Activated T-helper 1 cell treated with anti-CD3 and anti-CD28 coated beads, Interleukin-12 subunit alpha, Interleukin-12 subunit beta, Interleukin-2, Interleukin-4 antibody, amounts not matched to agents 30 ng/mL and 10 ng/mL and 1 ng/mL, durations not matched to agents 14 hours and 24 hours and 36 hours (primary cell): ENCODE measurements at regions of chr15 and their contacts with region 1.

Region 1: GRCh38 chr15:94582369-94582768 is 351.0 kb downstream of the MCTP2 start:
- DNase-seq: peak; percentile 48
- H3K4me3 Mint-ChIP-seq: no peak overlapping the region
- H3K27ac Mint-ChIP-seq: no peak overlapping the region
- H3K4me1 Mint-ChIP-seq: peaks cover 64% of the 10 kb centered on the region
- H3K27me3 Mint-ChIP-seq: peaks cover 61% of the 10 kb centered on the region

Region 2: DNA sequence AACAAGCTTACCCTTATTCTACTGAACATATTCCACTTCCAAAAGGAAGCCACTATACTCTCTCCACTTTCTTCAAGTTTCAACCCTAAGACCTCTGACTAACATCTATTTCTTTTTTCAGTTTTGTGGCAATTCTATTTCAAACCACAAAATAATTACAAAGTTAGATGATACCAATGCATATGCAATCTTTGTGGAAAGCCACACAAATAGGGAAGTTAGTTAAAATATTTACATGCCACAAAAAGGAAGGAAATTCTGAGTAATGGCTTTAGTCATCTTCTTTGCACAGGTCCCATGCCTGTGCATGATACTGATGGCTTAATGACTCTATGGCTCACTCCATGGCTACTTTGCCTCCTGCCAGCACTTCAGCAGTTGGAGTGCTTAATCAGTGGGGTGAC is 408.0 kb before region 1 on chr15:
- intact Hi-C with region 1: loop called (anchors 1 kb)
- DNase-seq: no peak
- H3K4me3 Mint-ChIP-seq: peak overlapping the region; percentile 38
- H3K27ac Mint-ChIP-seq: peak overlapping the region; percentile 85
- H3K4me1 Mint-ChIP-seq: peaks cover 58% of the 10 kb centered on the region
- H3K27me3 Mint-ChIP-seq: no peaks in the 10 kb centered on the region

Region 3: DNA sequence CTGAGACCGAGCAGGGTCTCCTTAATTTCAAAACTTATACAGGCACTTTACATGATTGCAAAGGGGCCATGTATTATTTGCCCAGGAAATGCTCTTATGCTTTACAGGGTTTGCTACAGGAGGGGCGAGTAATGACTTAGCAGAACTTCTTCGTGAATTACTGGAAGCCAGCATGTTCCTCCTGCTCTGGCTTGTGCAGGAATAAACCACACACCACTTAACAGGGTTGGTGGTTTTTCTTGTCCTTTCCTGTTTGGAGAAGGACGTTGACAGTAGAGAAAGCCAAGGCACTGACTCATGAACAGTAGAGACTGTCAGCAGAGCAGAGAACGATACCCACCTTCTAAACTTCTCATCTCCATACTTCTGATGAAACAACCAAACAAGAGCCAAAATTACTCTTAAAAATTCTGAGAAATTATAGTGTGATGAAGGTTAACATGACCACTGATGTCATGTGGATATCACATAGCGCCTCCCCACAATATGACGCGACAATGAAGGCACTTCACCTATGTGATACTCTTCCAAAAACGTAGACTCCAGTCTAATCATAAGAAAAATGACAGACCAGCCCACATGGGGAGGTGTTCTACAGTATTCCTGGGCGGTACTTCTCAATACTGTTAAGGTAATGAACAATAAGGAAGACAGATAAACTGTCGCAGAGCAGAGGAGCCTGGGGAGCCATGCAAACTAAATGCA is 375.8 kb before region 1 on chr15:
- intact Hi-C with region 1: no loop called
- DNase-seq: peak; percentile 69
- H3K4me3 Mint-ChIP-seq: peak overlapping the region; percentile 79
- H3K27ac Mint-ChIP-seq: peak overlapping the region; percentile 97
- H3K4me1 Mint-ChIP-seq: peaks cover 41% of the 10 kb centered on the region
- H3K27me3 Mint-ChIP-seq: no peaks in the 10 kb centered on the region

Region 4: DNA sequence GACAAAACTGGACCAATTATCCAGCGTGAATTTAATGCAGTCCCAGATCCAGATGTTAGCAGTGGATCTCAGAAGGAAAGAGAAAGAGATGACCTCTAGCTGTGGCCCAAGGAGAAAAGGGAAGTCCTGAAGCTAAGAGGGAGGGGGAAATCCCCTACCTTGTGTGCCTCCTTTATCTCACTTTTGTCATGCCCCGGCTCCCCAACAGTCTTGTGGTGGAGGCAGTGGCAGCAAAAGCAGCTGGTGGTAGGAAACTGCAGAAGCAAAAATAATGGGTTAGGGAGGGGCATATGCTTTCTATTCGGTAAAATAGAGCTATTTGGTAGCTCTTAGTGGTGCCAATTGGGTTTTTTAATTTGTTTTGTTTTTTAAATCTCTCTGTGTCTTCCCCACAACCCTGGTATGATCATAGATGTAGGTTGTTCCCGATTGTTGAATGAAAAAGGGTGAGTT is 294.5 kb before region 1 on chr15:
- intact Hi-C with region 1: no loop called
- DNase-seq: peak; percentile 67
- H3K4me3 Mint-ChIP-seq: peak overlapping the region; percentile 80
- H3K27ac Mint-ChIP-seq: peak overlapping the region; percentile 91
- H3K4me1 Mint-ChIP-seq: peaks cover 75% of the 10 kb centered on the region
- H3K27me3 Mint-ChIP-seq: no peaks in the 10 kb centered on the region

Region 5: DNA sequence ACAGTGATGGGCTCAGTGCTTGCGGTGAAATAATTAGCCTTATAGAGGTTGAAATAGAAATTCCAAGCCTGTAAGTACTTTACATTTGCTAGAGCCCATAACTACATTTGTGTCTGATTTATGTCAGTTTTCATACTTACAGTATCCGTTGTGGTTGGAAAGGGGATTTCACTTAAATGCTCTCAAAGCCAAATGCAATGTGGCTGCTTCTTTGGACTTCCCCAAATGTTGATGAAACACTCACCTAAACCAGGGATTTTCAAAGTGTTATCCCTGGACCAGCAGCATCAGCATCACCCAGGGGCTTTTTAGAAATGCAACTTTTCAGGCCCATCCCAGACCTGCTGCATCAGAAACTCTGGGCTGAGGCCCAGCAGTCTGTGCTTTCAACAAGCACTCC is 27.7 kb after region 1 on chr15:
- intact Hi-C with region 1: loop called (anchors 1 kb)
- DNase-seq: peak; percentile 29
- H3K4me3 Mint-ChIP-seq: peak overlapping the region; percentile 51
- H3K27ac Mint-ChIP-seq: no peak overlapping the region
- H3K4me1 Mint-ChIP-seq: peaks cover 68% of the 10 kb centered on the region
- H3K27me3 Mint-ChIP-seq: peaks cover 40% of the 10 kb centered on the region

Region 6: DNA sequence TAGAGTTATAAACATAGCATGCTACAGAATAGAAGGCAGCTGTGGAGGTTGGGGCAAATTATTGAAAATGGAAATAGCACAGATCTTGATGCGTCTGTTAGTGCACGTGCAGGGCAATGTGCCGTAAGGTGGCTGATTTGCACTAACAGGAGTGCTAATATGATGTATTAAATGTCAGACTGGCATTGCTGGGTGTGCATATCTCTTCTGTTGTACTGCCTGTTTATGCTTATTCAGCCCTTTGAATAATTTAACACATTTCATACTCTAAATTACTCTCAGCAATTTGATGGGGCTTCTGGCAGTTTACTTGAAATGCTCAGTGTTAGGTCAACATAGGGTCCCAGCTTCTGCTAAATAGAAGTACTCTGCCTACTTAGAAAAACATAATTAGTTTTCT is 44.6 kb after region 1 on chr15:
- intact Hi-C with region 1: no loop called
- DNase-seq: no peak
- H3K4me3 Mint-ChIP-seq: no peak overlapping the region
- H3K27ac Mint-ChIP-seq: no peak overlapping the region
- H3K4me1 Mint-ChIP-seq: peaks cover 21% of the 10 kb centered on the region
- H3K27me3 Mint-ChIP-seq: peaks cover 10% of the 10 kb centered on the region

Region 7: GRCh38 chr15:95018888-95019545 is 436.6 kb after region 1 on chr15:
- intact Hi-C with region 1: loop called (anchors 5 kb)
- DNase-seq: no peak
- H3K4me3 Mint-ChIP-seq: no peak overlapping the region
- H3K27ac Mint-ChIP-seq: no peak overlapping the region
- H3K4me1 Mint-ChIP-seq: peaks cover 9% of the 10 kb centered on the region
- H3K27me3 Mint-ChIP-seq: no peaks in the 10 kb centered on the region

Region 8: GRCh38 chr15:95291898-95292472 is 709.6 kb after region 1 on chr15:
- intact Hi-C with region 1: loop called (anchors 1 kb)
- DNase-seq: no peak
- H3K4me3 Mint-ChIP-seq: no peak overlapping the region
- H3K27ac Mint-ChIP-seq: no peak overlapping the region
- H3K4me1 Mint-ChIP-seq: peaks cover 47% of the 10 kb centered on the region
- H3K27me3 Mint-ChIP-seq: peaks cover 40% of the 10 kb centered on the region

Region 9: GRCh38 chr15:95347837-95348236 is 765.5 kb after region 1 on chr15:
- intact Hi-C with region 1: no loop called
- DNase-seq: no peak
- H3K4me3 Mint-ChIP-seq: no peak overlapping the region
- H3K27ac Mint-ChIP-seq: no peak overlapping the region
- H3K4me1 Mint-ChIP-seq: no peaks in the 10 kb centered on the region
- H3K27me3 Mint-ChIP-seq: no peaks in the 10 kb centered on the region